Endothelial cell of umbilical vein (primary cell): ENCODE measurements at regions of chr2 and their contacts with region 1.

Region 1: GRCh38 chr2:224816816-224817215 is 100.7 kb upstream of the CCDC195 start:
- DNase-seq: peak; percentile 62
- H3K4me3 ChIP-seq: no peak overlapping the region
- H3K27ac ChIP-seq: peak overlapping the region; percentile 64
- H3K4me1 ChIP-seq: peaks cover 34% of the 10 kb centered on the region
- H3K27me3 ChIP-seq: no peaks in the 10 kb centered on the region
- CTCF ChIP-seq: no peak
- POLR2A ChIP-seq: no peak

Region 2: DNA sequence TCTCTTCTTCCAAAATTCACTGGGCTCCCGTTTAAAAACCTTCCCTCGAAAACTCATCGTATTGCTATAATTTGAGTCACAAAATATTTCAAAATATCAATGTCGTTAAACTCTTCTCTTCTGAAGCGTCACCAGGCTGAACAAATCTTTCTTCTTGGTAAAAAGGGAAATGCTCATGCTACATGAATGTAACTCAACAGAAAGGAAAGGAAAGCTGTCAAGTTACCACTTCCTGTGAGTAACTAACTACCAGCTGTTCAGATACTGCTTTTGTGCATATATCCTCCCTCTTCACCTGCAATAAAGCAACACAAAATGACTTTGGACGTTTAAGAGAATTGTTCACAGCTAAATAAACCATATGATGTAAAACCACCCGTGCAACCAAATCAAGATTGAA is 130.1 kb after region 1 on chr2:
- CTCF ChIA-PET with region 1: interaction called, 4 read pairs
- POLR2A ChIA-PET with region 1: no interaction called
- dilution Hi-C with region 1: no loop called
- intact Hi-C with region 1: loop called (anchors 1 kb)
- DNase-seq: peak; percentile 84
- H3K4me3 ChIP-seq: peak overlapping the region; percentile 13 to 95 (median 93)
- H3K27ac ChIP-seq: peak overlapping the region; percentile 99
- H3K4me1 ChIP-seq: peaks cover 61% of the 10 kb centered on the region
- H3K27me3 ChIP-seq: no peaks in the 10 kb centered on the region
- CTCF ChIP-seq: no peak
- POLR2A ChIP-seq: peak; percentile 71

Region 3: DNA sequence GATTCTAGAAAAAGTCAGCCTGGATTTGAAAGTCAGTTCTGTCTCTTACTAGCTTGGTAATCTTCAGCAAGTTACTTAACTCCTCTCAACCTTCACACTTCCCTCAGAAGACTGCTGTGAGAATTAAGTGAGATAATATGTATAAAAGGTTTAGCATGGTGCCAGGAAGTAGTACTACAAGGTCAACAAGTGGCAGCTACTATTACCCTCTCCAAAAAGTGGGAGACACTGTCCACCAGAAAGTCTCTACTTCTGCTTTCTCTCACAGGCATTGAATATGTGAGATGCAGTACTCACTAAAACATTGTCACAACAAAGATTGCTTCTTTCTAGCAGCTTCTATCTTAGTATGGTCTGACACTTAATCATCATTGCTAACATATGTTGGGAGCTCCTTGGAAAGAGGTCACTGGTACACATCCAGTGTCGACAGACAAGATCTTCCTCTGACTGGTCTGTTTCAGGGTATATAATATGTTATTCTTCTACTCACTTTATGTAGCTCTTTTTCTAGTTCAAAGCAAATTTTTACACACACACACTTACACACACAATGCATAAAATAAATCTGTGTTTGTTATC is 177.5 kb after region 1 on chr2:
- CTCF ChIA-PET with region 1: no interaction called
- POLR2A ChIA-PET with region 1: no interaction called
- dilution Hi-C with region 1: no loop called
- intact Hi-C with region 1: no loop called
- DNase-seq: no peak
- H3K4me3 ChIP-seq: no peak overlapping the region
- H3K27ac ChIP-seq: no peak overlapping the region
- H3K4me1 ChIP-seq: no peaks in the 10 kb centered on the region
- H3K27me3 ChIP-seq: no peaks in the 10 kb centered on the region
- CTCF ChIP-seq: no peak
- POLR2A ChIP-seq: no peak